B cell (primary cell): ENCODE measurements at regions of chr7 and their contacts with region 1.

Region 1: DNA sequence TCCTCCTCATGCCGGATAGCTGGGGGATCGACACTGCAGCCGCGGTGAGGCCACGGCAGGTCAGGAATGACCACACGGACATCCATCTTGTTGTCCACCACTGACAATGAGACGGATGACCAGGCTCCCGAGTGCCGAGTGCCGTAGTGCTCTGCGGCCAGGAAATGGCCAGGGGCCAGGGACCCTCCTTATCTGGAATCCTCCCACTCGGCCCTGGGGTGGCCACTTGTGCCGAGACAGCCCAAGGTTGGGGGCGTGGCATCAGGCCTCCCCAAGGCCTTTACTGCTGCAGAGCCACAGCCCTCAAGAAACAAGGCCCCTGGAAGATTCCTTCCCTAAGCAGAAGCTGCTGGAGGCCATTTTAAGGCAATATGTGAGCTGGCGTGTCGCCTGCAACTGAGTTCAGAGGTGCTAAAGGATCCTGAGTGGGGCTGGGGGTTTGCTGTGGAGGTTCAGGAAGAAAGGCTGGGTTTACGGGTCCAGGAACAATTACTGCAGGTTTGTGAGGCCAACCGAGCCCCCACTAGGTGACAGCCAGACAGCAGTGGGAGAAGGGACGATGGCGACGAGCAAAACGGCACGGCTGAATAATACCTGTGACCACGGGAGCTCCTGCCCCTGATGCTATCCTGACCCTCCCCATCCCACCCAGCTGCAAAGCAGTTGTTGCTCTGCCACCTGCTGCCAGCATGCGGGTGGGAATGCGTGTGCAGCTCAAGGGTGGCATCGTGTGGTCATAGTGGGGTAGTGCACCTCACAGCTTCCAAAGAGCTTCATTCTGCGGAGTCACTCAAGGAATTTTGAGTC is 31.6 kb upstream of the LEP start:
- DNase-seq: peak; percentile 85
- ATAC-seq: peak; percentile 88
- H3K4me3 ChIP-seq: no peak overlapping the region
- H3K4me3 Mint-ChIP-seq: no peak overlapping the region
- H3K27ac ChIP-seq: no peak overlapping the region
- H3K27ac Mint-ChIP-seq: no peak overlapping the region
- H3K4me1 ChIP-seq: peaks cover 0 to 7% of the 10 kb centered on the region in 2 donors
- H3K4me1 Mint-ChIP-seq: no peaks in the 10 kb centered on the region
- H3K27me3 ChIP-seq: peaks cover 0 to 4% (median 1%) of the 10 kb centered on the region in 4 experiments
- H3K27me3 Mint-ChIP-seq: peaks cover 19% of the 10 kb centered on the region
- CTCF ChIP-seq: peak; percentile 94

Region 2: DNA sequence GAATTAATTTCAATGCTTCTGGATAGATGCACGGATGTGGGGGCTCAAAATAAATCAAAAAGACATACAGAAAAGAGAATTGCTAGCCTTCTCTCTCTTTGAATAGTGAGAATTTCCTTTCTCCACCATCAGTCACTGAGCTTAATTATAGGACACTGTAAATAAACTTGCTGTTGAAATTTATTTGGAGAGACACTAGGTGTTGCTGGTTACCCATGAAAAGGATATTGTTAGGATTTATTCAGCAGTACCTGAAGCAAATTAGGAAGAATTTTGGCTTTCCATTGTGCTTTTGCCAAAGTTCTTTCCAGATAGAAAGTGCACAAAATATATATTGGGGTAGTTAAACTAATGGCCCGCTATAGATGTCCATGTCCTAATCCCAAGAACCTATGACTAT is 651.6 kb before region 1 on chr7:
- CTCF ChIA-PET with region 1: interaction called, 7 read pairs
- POLR2A ChIA-PET with region 1: no interaction called
- intact Hi-C with region 1: loop called (anchors 5 kb)
- DNase-seq: no peak
- ATAC-seq: no peak
- H3K4me3 ChIP-seq: no peak overlapping the region
- H3K4me3 Mint-ChIP-seq: no peak overlapping the region
- H3K27ac ChIP-seq: no peak overlapping the region
- H3K27ac Mint-ChIP-seq: no peak overlapping the region
- H3K4me1 ChIP-seq: no peaks in the 10 kb centered on the region
- H3K4me1 Mint-ChIP-seq: no peaks in the 10 kb centered on the region
- H3K27me3 ChIP-seq: no peaks in the 10 kb centered on the region
- H3K27me3 Mint-ChIP-seq: peaks cover 8% of the 10 kb centered on the region
- CTCF ChIP-seq: no peak

Region 3: GRCh38 chr7:127717502-127718339 is 491.7 kb before region 1 on chr7:
- CTCF ChIA-PET with region 1: interaction called, 456 read pairs
- POLR2A ChIA-PET with region 1: no interaction called
- intact Hi-C with region 1: no loop called
- DNase-seq: no peak
- ATAC-seq: no peak
- H3K4me3 ChIP-seq: no peak overlapping the region
- H3K4me3 Mint-ChIP-seq: no peak overlapping the region
- H3K27ac ChIP-seq: no peak overlapping the region
- H3K27ac Mint-ChIP-seq: no peak overlapping the region
- H3K4me1 ChIP-seq: no peaks in the 10 kb centered on the region
- H3K4me1 Mint-ChIP-seq: peaks cover 6% of the 10 kb centered on the region
- H3K27me3 ChIP-seq: no peaks in the 10 kb centered on the region
- H3K27me3 Mint-ChIP-seq: no peaks in the 10 kb centered on the region
- CTCF ChIP-seq: no peak

Region 4: DNA sequence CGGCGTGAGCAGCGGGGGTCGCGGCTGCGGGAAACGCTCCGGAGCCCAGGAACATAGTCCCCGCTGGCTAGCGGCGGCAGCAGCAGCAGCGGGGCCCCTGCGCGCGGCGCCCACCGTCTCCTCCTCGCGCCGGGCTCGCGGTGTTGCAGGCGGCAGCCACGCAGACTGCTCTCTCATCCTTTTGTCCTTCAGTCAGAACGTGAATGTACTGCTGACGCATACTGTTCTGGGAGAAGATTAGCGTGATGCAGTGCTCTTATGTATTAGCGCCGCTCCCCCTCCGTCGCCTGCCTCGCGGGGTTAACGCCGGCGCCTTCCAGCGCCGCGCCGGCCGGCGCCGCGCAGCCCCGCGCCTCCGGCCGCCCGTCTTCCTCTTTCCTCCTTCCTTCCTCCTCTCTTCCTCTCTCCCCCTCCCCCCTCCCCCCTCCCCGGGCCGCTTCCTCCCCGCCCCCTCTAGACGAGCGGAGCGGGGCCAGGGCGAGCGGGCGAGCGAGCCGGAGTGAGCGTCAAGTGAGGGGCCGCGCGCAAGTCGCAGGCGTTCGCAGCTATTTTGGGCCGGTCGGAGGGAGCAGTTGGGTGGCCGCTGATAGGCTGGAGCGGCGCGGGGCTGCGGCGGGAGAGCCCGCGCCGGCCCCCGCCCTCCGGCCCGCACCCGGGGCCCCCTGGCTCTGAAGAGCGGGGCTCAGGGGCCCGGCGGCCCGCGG is 177.4 kb before region 1 on chr7:
- CTCF ChIA-PET with region 1: interaction called, 14 read pairs
- POLR2A ChIA-PET with region 1: no interaction called
- intact Hi-C with region 1: loop called (anchors 2 kb)
- DNase-seq: peak; percentile 74
- ATAC-seq: peak; percentile 83
- H3K4me3 ChIP-seq: peak overlapping the region; percentile 15 to 57 (median 51)
- H3K4me3 Mint-ChIP-seq: peak overlapping the region; percentile 96
- H3K27ac ChIP-seq: no peak overlapping the region
- H3K27ac Mint-ChIP-seq: peak overlapping the region; percentile 78
- H3K4me1 ChIP-seq: peaks cover 13 to 26% of the 10 kb centered on the region in 2 donors
- H3K4me1 Mint-ChIP-seq: peaks cover 28% of the 10 kb centered on the region
- H3K27me3 ChIP-seq: peaks cover 0 to 18% (median 0%) of the 10 kb centered on the region in 4 experiments
- H3K27me3 Mint-ChIP-seq: peaks cover 8% of the 10 kb centered on the region
- CTCF ChIP-seq: no peak

Region 5: GRCh38 chr7:128155100-128155740 is 54.2 kb before region 1 on chr7:
- CTCF ChIA-PET with region 1: interaction called, 14 read pairs
- POLR2A ChIA-PET with region 1: no interaction called
- intact Hi-C with region 1: no loop called
- DNase-seq: no peak
- ATAC-seq: no peak
- H3K4me3 ChIP-seq: no peak overlapping the region
- H3K4me3 Mint-ChIP-seq: no peak overlapping the region
- H3K27ac ChIP-seq: no peak overlapping the region
- H3K27ac Mint-ChIP-seq: no peak overlapping the region
- H3K4me1 ChIP-seq: no peaks in the 10 kb centered on the region
- H3K4me1 Mint-ChIP-seq: no peaks in the 10 kb centered on the region
- H3K27me3 ChIP-seq: peaks cover 0 to 11% (median 1%) of the 10 kb centered on the region in 4 experiments
- H3K27me3 Mint-ChIP-seq: peaks cover 35% of the 10 kb centered on the region
- CTCF ChIP-seq: no peak

Region 6: DNA sequence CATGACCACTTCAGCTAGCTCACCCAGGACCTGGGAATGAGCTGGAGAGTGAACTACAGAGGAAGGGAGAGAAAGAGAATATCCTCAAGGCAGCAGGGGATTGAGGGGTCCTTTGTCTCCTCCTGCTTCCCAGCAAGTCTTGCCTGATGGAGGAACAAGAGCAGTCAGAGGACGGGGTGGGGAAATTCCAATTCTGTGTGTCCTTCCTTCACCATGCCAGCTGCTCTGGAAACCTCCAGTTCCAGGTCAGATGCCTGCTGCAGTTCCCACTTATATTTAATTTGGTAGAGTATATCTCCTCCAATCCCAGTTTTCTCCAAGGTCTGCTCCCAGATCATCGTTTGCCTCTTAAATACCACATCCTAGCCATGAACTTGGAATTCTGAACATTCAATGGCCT is 10.2 kb after region 1 on chr7:
- CTCF ChIA-PET with region 1: interaction called, 14 read pairs
- POLR2A ChIA-PET with region 1: no interaction called
- intact Hi-C with region 1: no loop called
- DNase-seq: no peak
- ATAC-seq: no peak
- H3K4me3 ChIP-seq: no peak overlapping the region
- H3K4me3 Mint-ChIP-seq: no peak overlapping the region
- H3K27ac ChIP-seq: no peak overlapping the region
- H3K27ac Mint-ChIP-seq: no peak overlapping the region
- H3K4me1 ChIP-seq: no peaks in the 10 kb centered on the region
- H3K4me1 Mint-ChIP-seq: no peaks in the 10 kb centered on the region
- H3K27me3 ChIP-seq: peaks cover 0 to 13% (median 0%) of the 10 kb centered on the region in 4 experiments
- H3K27me3 Mint-ChIP-seq: peaks cover 40% of the 10 kb centered on the region
- CTCF ChIP-seq: no peak

Region 7: GRCh38 chr7:128255271-128255670 is 45.8 kb after region 1 on chr7:
- CTCF ChIA-PET with region 1: no interaction called
- POLR2A ChIA-PET with region 1: no interaction called
- intact Hi-C with region 1: no loop called
- DNase-seq: no peak
- ATAC-seq: no peak
- H3K4me3 ChIP-seq: no peak overlapping the region
- H3K4me3 Mint-ChIP-seq: no peak overlapping the region
- H3K27ac ChIP-seq: no peak overlapping the region
- H3K27ac Mint-ChIP-seq: no peak overlapping the region
- H3K4me1 ChIP-seq: no peaks in the 10 kb centered on the region
- H3K4me1 Mint-ChIP-seq: no peaks in the 10 kb centered on the region
- H3K27me3 ChIP-seq: peaks cover 0 to 3% (median 0%) of the 10 kb centered on the region in 4 experiments
- H3K27me3 Mint-ChIP-seq: peaks cover 9% of the 10 kb centered on the region
- CTCF ChIP-seq: no peak

Region 8: GRCh38 chr7:128266883-128267607 is 57.6 kb after region 1 on chr7:
- CTCF ChIA-PET with region 1: no interaction called
- POLR2A ChIA-PET with region 1: no interaction called
- intact Hi-C with region 1: no loop called
- DNase-seq: no peak
- ATAC-seq: no peak
- H3K4me3 ChIP-seq: no peak overlapping the region
- H3K4me3 Mint-ChIP-seq: no peak overlapping the region
- H3K27ac ChIP-seq: no peak overlapping the region
- H3K27ac Mint-ChIP-seq: no peak overlapping the region
- H3K4me1 ChIP-seq: no peaks in the 10 kb centered on the region
- H3K4me1 Mint-ChIP-seq: no peaks in the 10 kb centered on the region
- H3K27me3 ChIP-seq: peaks cover 0 to 21% (median 0%) of the 10 kb centered on the region in 4 experiments
- H3K27me3 Mint-ChIP-seq: peaks cover 31% of the 10 kb centered on the region
- CTCF ChIP-seq: no peak